H1 (cell line): ENCODE measurements at regions of chr1 and their contacts with region 1.

Region 1: DNA sequence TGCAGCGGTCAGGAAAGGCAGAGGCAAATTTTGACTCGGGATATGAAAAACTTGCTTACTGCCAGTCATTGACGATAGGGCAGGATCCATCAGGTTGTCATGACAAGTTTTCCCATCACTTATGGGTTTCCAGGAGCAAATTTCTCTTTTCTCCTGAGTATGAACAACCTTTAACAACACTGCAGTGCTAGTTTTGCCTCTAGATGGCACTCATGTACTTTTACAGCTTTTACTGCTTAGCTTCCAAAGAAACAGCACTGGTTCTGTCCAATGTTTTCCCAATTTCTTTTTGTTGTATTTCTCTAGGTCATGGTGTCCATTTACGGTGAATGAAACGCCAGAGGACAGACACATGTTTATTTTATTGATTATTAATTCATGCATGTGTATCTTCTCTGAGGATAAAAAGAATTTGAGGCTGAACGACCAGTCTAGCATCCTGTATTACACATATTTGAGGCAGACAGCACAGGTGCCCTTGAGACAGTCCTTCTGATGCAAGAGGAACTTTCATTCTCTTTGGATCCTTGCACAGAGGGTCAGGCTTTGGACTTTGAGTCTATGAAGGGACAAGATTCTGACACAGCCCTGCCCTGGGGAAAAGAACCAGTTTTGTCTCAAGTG is 112.3 kb upstream of the TRABD2B start:
- DNase-seq: no peak
- H3K4me3 ChIP-seq: no peak overlapping the region
- H3K27ac ChIP-seq: no peak overlapping the region
- H3K4me1 ChIP-seq: peaks cover 0 to 4% (median under 1%) of the 10 kb centered on the region in 4 experiments; a peak in 1 of 7 replicates
- H3K27me3 ChIP-seq: no peaks in the 10 kb centered on the region
- CTCF ChIP-seq: peak in 2 of 3 experiments; percentile 81 to 87; a peak in 3 of 4 replicates
- EP300 ChIP-seq: no peak
- POLR2A ChIP-seq: no peak
- RAD21 ChIP-seq: peak; percentile 94 to 96

Region 2: GRCh38 chr1:48082271-48082962 is 27.1 kb before region 1 on chr1:
- CTCF ChIA-PET with region 1: no interaction called
- POLR2A ChIA-PET with region 1: no interaction called
- DNase-seq: no peak
- H3K4me3 ChIP-seq: no peak overlapping the region
- H3K27ac ChIP-seq: no peak overlapping the region
- H3K4me1 ChIP-seq: no peaks in the 10 kb centered on the region
- H3K27me3 ChIP-seq: no peaks in the 10 kb centered on the region; a peak in 1 of 7 replicates
- CTCF ChIP-seq: no peak
- EP300 ChIP-seq: no peak
- POLR2A ChIP-seq: no peak
- RAD21 ChIP-seq: no peak

Region 3: DNA sequence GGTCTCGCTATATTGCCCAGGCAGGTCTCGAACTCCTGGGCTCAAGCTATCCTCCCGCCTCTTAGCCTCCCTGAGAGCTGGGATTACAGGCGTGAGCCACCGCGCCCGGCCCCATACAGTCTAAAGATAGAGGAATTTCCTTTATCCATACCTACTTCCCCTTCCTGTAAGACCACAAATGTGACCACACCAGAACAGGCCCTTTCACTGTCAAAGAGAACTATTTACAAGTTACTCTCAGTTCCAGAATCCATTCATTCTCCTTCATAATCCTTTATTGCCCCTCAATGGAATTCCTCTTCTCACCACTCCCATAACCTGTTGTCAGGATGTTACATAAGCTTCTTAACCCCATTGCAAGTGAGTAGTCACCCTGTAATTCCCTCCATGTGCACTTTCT is 86.7 kb after region 1 on chr1:
- CTCF ChIA-PET with region 1: interaction called, 121 read pairs
- POLR2A ChIA-PET with region 1: no interaction called
- DNase-seq: no peak
- H3K4me3 ChIP-seq: no peak overlapping the region
- H3K27ac ChIP-seq: no peak overlapping the region
- H3K4me1 ChIP-seq: no peaks in the 10 kb centered on the region
- H3K27me3 ChIP-seq: no peaks in the 10 kb centered on the region
- CTCF ChIP-seq: no peak
- EP300 ChIP-seq: no peak
- POLR2A ChIP-seq: no peak
- RAD21 ChIP-seq: no peak

Region 4: DNA sequence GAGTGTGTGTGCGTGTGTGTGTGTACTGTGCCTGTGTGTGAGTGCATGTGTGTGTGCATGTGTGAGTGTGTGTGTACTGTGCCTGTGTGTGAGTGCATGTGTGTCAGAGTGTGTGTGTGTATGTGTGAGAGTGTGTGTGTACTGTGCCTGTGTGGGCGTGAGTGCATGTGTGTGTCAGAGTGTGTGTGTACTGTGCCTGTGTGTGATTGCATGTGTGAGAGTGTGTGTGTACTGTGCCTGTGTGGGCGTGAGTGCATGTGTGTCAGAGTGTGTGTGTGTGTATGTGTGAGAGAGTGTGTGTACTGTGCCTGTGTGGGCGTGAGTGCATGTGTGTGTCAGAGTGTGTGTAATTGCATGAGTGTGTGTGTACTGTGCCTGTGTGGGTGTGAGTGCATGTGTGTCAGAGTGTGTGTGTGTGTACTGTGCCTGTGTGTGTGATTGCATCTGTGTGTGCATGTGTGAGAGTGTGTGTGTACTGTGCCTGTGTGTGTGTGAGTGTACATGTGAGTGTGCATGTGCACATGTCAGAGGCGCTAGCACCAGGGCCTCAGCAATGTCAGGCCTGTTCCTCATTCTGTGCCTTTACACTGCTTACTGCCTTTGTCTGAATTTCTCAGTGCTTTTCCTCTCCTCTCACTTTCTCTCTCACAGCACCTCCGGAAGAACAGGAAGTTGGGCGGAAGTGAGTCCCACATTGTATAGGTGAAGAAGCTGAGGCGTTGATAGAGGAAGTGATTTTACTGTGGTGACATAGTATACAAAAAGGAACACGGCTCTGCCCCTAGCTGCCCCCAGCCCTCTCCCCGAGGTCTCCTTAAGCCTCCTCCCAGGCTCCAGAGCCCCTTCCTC is 117.9 kb after region 1 on chr1:
- CTCF ChIA-PET with region 1: interaction called, 14 read pairs
- POLR2A ChIA-PET with region 1: no interaction called
- DNase-seq: no peak
- H3K4me3 ChIP-seq: no peak overlapping the region
- H3K27ac ChIP-seq: no peak overlapping the region
- H3K4me1 ChIP-seq: no peaks in the 10 kb centered on the region
- H3K27me3 ChIP-seq: peaks cover 0 to 1% (median 0%) of the 10 kb centered on the region in 4 experiments; a peak in 1 of 7 replicates
- CTCF ChIP-seq: no peak
- EP300 ChIP-seq: no peak
- POLR2A ChIP-seq: no peak
- RAD21 ChIP-seq: no peak